Common myeloid progenitor, CD34-positive (primary cell): ENCODE measurements at regions of chr6 and their contacts with region 1.

Region 1: DNA sequence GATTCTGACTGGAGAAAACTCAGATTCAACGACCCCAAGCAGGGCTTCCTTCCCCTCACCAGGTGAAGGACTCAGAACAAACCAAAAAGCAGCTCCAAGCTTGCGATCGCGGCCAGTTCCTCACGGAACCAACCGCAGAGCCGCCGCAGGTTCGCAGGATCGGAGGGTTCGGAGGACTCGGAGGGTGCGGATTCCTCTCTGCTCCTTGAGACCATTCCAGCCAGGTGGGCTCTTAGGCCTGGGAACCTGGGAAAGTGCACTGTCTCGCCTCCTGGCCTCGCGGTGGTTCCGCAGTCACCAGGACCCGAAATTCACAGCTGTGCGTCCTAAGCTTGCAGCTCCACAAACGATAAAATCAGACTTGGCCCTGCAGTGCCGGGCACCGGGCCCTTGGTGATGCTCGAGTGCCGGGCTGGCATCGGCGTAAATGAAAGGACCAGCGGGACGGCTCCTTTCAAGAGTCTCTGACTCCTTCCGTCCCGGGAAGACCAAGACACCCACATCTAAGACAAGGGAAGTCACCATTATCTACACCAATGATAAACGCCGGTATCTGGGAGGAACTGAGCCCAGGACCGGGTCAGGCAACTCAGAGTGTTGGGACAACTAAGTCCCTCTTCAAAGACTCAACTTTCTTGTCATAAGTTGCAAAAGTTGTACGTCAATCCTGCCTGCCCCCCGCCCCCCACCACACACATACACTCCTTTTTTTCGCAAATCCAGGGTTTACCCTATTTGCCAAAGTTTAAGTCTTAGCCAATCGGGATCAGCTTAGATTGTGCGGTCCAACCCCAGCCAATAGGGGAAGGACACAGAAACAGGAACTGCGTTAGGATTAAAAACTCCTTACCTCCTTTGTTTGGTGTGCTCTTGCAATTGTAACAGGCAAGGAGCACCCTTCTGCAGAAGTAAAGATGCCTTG is 69.8 kb upstream of the PRSS16 start:
- DNase-seq: peak; percentile 92 to 97 (median 93)
- H3K4me3 ChIP-seq: peak overlapping the region; percentile 93 to 100 (median 99)
- H3K27ac ChIP-seq: peak overlapping the region; percentile 72 to 87
- H3K4me1 ChIP-seq: peaks cover 0 to 7% (median 2%) of the 10 kb centered on the region in 4 experiments
- H3K27me3 ChIP-seq: peaks cover 0 to 3% (median 0%) of the 10 kb centered on the region in 5 experiments

Region 2: GRCh38 chr6:26754212-26754611 is 423.5 kb before region 1 on chr6:
- CTCF ChIA-PET with region 1: no interaction called
- POLR2A ChIA-PET with region 1: no interaction called
- DNase-seq: no peak
- H3K4me3 ChIP-seq: no peak overlapping the region
- H3K27ac ChIP-seq: no peak overlapping the region
- H3K4me1 ChIP-seq: no peaks in the 10 kb centered on the region
- H3K27me3 ChIP-seq: peaks cover 0 to 50% (median 15%) of the 10 kb centered on the region in 5 experiments

Region 3: GRCh38 chr6:27161115-27161514 is 16.6 kb before region 1 on chr6:
- CTCF ChIA-PET with region 1: interaction called, 15 read pairs
- POLR2A ChIA-PET with region 1: interaction called, 4 read pairs
- DNase-seq: no peak
- H3K4me3 ChIP-seq: no peak overlapping the region
- H3K27ac ChIP-seq: no peak overlapping the region
- H3K4me1 ChIP-seq: peaks cover 0 to 11% (median 9%) of the 10 kb centered on the region in 4 experiments
- H3K27me3 ChIP-seq: no peaks in the 10 kb centered on the region

Region 4: DNA sequence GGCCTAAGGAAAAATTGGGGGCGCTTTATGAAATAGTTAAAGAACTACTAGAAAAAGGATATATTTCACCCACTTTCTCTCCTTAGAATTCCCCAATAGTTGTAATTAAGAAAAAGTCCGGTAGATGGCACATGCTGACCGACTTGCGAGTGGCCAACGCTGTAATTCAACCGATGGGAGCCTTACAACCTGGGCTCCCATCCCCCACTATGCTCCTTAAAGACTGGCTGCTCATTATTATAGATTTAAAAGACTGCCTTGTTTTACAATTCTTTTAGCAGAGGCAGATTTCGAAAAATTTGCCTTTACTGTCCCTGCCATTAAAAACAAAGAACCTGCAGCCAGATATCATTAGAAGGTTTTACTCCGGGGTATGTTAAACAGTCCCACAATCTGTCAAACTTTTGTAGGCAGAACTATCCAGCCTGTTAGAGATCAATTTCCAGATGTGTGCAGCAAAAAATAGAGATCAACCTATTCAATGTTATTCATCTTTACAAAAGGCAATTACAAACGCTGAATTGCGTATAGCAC is 11.2 kb after region 1 on chr6:
- CTCF ChIA-PET with region 1: interaction called, 10 read pairs
- POLR2A ChIA-PET with region 1: no interaction called
- DNase-seq: peak; percentile 81 to 86 (median 84)
- H3K4me3 ChIP-seq: peak overlapping the region; percentile 65 to 96 (median 80)
- H3K27ac ChIP-seq: peak overlapping the region in 1 of 2 experiments; percentile 74
- H3K4me1 ChIP-seq: peaks cover 0 to 10% (median 6%) of the 10 kb centered on the region in 4 experiments
- H3K27me3 ChIP-seq: peaks cover 0 to 2% (median 0%) of the 10 kb centered on the region in 5 experiments

Region 5: DNA sequence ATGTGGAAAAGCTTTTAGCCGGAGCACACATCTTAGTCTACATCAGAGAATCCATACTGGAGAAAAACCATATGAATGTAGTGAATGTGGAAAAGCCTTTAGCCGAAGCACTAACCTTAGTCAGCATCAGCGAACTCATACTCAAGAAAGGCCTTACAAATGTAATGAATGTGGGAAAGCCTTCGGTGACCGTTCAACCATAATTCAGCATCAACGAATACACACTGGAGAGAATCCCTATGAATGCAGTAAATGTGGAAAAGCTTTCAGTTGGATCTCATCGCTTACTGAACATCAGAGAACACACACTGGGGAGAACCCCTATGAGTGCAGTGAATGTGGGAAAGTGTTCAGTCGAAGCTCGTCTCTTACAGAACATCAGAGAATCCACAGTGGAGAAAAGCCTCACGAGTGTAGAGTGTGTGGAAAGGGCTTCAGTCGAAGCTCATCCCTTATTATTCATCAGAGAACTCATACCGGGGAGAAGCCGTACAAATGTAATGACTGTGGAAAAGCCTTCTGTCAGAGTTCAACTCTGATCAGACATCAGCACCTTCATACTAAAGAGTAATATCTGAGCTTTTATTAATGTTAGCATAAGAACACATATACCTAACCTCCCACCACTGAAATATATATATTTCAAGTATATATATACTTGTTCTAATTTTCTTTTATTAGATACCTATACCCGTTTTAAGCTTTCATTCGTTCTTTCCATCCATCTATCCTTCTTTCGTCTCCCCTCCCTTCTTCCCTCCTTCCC is 223.3 kb after region 1 on chr6:
- CTCF ChIA-PET with region 1: no interaction called
- POLR2A ChIA-PET with region 1: no interaction called
- DNase-seq: no peak
- H3K4me3 ChIP-seq: no peak overlapping the region
- H3K27ac ChIP-seq: no peak overlapping the region
- H3K4me1 ChIP-seq: no peaks in the 10 kb centered on the region
- H3K27me3 ChIP-seq: no peaks in the 10 kb centered on the region